H1 (cell line): ENCODE measurements at regions of chr7 and their contacts with region 1.

Region 1: DNA sequence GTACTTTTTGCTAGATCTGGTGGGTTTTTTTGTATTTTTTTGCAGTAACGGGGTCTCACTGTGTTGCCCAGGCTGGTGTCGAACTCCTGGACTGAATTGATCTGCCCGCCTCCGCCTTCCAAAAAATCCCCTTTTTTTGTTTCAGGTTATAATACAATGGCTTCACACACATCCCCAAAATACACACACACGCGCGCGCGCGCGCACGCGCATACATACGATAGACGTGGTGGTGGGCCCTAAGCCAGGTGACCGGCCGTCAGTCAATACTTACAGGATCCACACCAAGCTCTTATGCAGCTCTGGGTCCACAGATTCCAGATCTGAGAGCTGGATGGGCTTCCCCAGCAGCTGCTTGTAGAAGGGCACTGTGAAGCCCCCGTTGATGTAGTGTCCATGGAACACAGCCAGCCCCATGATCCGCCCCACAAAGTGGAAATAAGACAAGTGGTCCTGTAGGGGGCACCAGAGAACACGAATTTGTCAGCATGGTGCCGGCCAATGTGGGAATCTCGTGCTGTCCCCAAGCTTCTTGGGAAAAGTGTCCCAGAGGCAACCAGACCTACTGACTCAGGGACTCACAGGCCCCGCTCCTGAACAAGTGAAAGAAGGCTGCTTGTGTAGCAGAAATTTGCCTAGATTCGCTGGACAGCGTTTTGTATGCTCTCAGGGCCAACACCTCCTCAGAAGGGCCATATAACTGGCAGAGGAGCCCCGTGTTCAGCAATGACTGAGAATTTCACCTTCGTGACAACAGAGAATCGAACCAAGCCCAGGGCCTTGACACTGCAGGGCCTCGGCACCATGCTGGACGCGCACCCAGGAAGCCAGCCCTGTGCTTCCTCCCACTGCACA is 103.6 kb downstream of the SMURF1 start:
- DNase-seq: peak; percentile 62 to 86
- H3K4me3 ChIP-seq: no peak overlapping the region
- H3K27ac ChIP-seq: no peak overlapping the region
- H3K4me1 ChIP-seq: no peaks in the 10 kb centered on the region
- H3K27me3 ChIP-seq: no peaks in the 10 kb centered on the region
- CTCF ChIP-seq: peak; percentile 79 to 84 (median 79)
- EP300 ChIP-seq: no peak
- POLR2A ChIP-seq: no peak
- RAD21 ChIP-seq: peak; percentile 85 to 92

Region 2: GRCh38 chr7:99005776-99006175 is 34.6 kb before region 1 on chr7:
- CTCF ChIA-PET with region 1: interaction called, 10 read pairs
- POLR2A ChIA-PET with region 1: no interaction called
- DNase-seq: no peak
- H3K4me3 ChIP-seq: no peak overlapping the region
- H3K27ac ChIP-seq: no peak overlapping the region
- H3K4me1 ChIP-seq: no peaks in the 10 kb centered on the region
- H3K27me3 ChIP-seq: no peaks in the 10 kb centered on the region
- CTCF ChIP-seq: no peak
- EP300 ChIP-seq: no peak
- POLR2A ChIP-seq: no peak
- RAD21 ChIP-seq: no peak

Region 3: GRCh38 chr7:99021941-99022560 is 18.3 kb before region 1 on chr7:
- CTCF ChIA-PET with region 1: interaction called, 12 read pairs
- POLR2A ChIA-PET with region 1: interaction called, 4 read pairs
- DNase-seq: no peak
- H3K4me3 ChIP-seq: no peak overlapping the region
- H3K27ac ChIP-seq: no peak overlapping the region
- H3K4me1 ChIP-seq: no peaks in the 10 kb centered on the region
- H3K27me3 ChIP-seq: no peaks in the 10 kb centered on the region
- CTCF ChIP-seq: no peak
- EP300 ChIP-seq: no peak
- POLR2A ChIP-seq: no peak
- RAD21 ChIP-seq: no peak

Region 4: DNA sequence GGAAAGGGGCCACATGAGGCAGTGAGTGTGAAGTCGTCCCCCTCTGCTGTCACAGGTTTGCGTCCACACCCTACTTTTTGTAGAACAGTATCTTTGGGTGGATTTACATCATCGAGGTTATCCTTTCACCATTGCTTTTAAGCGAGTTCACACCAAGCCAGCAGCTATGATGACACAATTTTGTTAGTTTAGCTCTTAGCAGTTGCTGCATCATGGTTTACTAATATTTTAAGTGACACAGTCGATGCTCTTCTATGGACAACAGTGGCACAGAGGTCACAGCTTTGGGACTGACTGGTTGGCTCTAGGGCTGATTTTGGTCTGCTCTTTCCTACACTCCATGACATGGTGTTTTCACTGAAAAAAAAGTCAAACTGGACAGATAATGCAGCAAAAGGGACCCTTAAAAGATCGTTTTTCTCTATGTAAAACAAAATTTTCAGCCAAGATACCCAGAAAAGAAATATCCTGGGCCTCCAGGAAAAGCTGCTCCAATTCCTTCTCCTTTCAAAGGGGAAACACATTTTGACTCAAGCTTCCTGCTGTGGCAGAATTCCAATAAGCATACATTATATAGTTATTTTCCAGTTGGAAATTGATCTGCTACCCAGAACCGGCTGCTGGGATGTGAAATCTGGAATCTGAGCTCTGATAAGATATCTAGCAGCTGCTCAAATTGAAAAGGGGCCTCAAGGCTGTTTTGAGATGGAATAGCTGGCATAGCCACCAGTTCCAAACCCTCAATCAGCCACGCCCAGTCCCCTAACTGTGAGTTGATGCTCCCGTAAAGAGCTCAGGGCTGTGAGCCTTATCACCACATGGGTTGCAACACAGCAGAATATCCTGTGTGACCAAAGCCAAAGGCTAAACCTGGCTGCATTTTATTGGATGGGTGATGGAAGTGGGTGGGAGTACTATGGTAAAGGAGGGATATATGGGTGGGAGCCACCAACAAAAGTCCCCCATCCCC is 10.6 kb before region 1 on chr7:
- CTCF ChIA-PET with region 1: interaction called, 12 read pairs
- POLR2A ChIA-PET with region 1: interaction called, 4 read pairs
- DNase-seq: no peak
- H3K4me3 ChIP-seq: no peak overlapping the region
- H3K27ac ChIP-seq: no peak overlapping the region
- H3K4me1 ChIP-seq: 0 out of 7 replicates have a peak, but pooled peaks cover 0 to 3% (median 0%) of the 10 kb centered on the region in 4 experiments
- H3K27me3 ChIP-seq: no peaks in the 10 kb centered on the region
- CTCF ChIP-seq: no peak
- EP300 ChIP-seq: no peak
- POLR2A ChIP-seq: no peak; a peak in 1 of 3 replicates
- RAD21 ChIP-seq: no peak

Region 5: GRCh38 chr7:99267481-99267840 is 227.1 kb after region 1 on chr7:
- CTCF ChIA-PET with region 1: interaction called, 11 read pairs
- POLR2A ChIA-PET with region 1: no interaction called
- DNase-seq: no peak
- H3K4me3 ChIP-seq: no peak overlapping the region
- H3K27ac ChIP-seq: no peak overlapping the region
- H3K4me1 ChIP-seq: 0 out of 7 replicates have a peak, but pooled peaks cover 0 to 2% (median 0%) of the 10 kb centered on the region in 4 experiments
- H3K27me3 ChIP-seq: no peaks in the 10 kb centered on the region
- CTCF ChIP-seq: no peak
- EP300 ChIP-seq: no peak
- POLR2A ChIP-seq: no peak
- RAD21 ChIP-seq: no peak

Region 6: GRCh38 chr7:99278177-99278576 is 237.8 kb after region 1 on chr7:
- CTCF ChIA-PET with region 1: interaction called, 10 read pairs
- POLR2A ChIA-PET with region 1: no interaction called
- DNase-seq: no peak
- H3K4me3 ChIP-seq: no peak overlapping the region
- H3K27ac ChIP-seq: no peak overlapping the region
- H3K4me1 ChIP-seq: no peaks in the 10 kb centered on the region
- H3K27me3 ChIP-seq: no peaks in the 10 kb centered on the region
- CTCF ChIP-seq: peak; percentile 2 to 35 (median 28); a peak in 2 of 4 replicates
- EP300 ChIP-seq: no peak
- POLR2A ChIP-seq: no peak
- RAD21 ChIP-seq: peak; percentile 32 to 36

Region 7: GRCh38 chr7:99312316-99313203 is 272.2 kb after region 1 on chr7:
- CTCF ChIA-PET with region 1: interaction called, 87 read pairs
- POLR2A ChIA-PET with region 1: no interaction called
- DNase-seq: peak in 1 of 2 experiments; percentile 91
- H3K4me3 ChIP-seq: no peak overlapping the region
- H3K27ac ChIP-seq: no peak overlapping the region
- H3K4me1 ChIP-seq: no peaks in the 10 kb centered on the region
- H3K27me3 ChIP-seq: no peaks in the 10 kb centered on the region
- CTCF ChIP-seq: peak; percentile 66 to 88 (median 82)
- EP300 ChIP-seq: no peak
- POLR2A ChIP-seq: no peak
- RAD21 ChIP-seq: peak; percentile 88 to 89